ENCODE measurements at regions of chr6 and their contacts with region 1.

Region 1: GRCh38 chr6:5030596-5031136 is 26.8 kb upstream of the RPP40 start:
- DNase-seq: peak; percentile 85 to 95 (median 87)
- ATAC-seq: peak; percentile 97
- H3K4me3 ChIP-seq: no peak overlapping the region
- H3K27ac ChIP-seq: peak overlapping the region; percentile 28; the same call in 1 of the 3 replicates
- H3K4me1 ChIP-seq: peaks cover 7 to 14% of the 10 kb centered on the region in 2 experiments
- H3K27me3 ChIP-seq: 0 out of 5 replicates have a peak, but pooled peaks cover 0 to 2% of the 10 kb centered on the region in 2 experiments
- CTCF ChIP-seq: peak; percentile 84 to 94 (median 93)
- EP300 ChIP-seq: peak; percentile 20; the same call in 1 of the 2 replicates
- POLR2A ChIP-seq: no peak
- RAD21 ChIP-seq: peak; percentile 78 to 94

Region 2: GRCh38 chr6:4593951-4594350 is 436.7 kb before region 1 on chr6:
- CTCF ChIA-PET with region 1: no interaction called
- POLR2A ChIA-PET with region 1: no interaction called
- in situ Hi-C with region 1: no loop called
- intact Hi-C with region 1: no loop called
- DNase-seq: no peak
- ATAC-seq: no peak
- H3K4me3 ChIP-seq: no peak overlapping the region
- H3K27ac ChIP-seq: no peak overlapping the region
- H3K4me1 ChIP-seq: no peaks in the 10 kb centered on the region; a peak in 1 of 5 replicates
- H3K27me3 ChIP-seq: peaks cover 2 to 14% of the 10 kb centered on the region in 2 experiments
- CTCF ChIP-seq: no peak
- EP300 ChIP-seq: no peak
- POLR2A ChIP-seq: no peak
- RAD21 ChIP-seq: no peak

Region 3: GRCh38 chr6:4853782-4854511 is 176.7 kb before region 1 on chr6:
- CTCF ChIA-PET with region 1: no interaction called
- POLR2A ChIA-PET with region 1: no interaction called
- in situ Hi-C with region 1: no loop called
- intact Hi-C with region 1: loop called (anchors 10 kb)
- DNase-seq: peak in 2 of 4 experiments; percentile 71
- ATAC-seq: peak; percentile 85
- H3K4me3 ChIP-seq: no peak overlapping the region
- H3K27ac ChIP-seq: no peak overlapping the region
- H3K4me1 ChIP-seq: peaks cover 10 to 17% of the 10 kb centered on the region in 2 experiments; a peak in 4 of 5 replicates
- H3K27me3 ChIP-seq: no peaks in the 10 kb centered on the region
- CTCF ChIP-seq: no peak
- EP300 ChIP-seq: no peak
- POLR2A ChIP-seq: no peak
- RAD21 ChIP-seq: no peak

Region 4: DNA sequence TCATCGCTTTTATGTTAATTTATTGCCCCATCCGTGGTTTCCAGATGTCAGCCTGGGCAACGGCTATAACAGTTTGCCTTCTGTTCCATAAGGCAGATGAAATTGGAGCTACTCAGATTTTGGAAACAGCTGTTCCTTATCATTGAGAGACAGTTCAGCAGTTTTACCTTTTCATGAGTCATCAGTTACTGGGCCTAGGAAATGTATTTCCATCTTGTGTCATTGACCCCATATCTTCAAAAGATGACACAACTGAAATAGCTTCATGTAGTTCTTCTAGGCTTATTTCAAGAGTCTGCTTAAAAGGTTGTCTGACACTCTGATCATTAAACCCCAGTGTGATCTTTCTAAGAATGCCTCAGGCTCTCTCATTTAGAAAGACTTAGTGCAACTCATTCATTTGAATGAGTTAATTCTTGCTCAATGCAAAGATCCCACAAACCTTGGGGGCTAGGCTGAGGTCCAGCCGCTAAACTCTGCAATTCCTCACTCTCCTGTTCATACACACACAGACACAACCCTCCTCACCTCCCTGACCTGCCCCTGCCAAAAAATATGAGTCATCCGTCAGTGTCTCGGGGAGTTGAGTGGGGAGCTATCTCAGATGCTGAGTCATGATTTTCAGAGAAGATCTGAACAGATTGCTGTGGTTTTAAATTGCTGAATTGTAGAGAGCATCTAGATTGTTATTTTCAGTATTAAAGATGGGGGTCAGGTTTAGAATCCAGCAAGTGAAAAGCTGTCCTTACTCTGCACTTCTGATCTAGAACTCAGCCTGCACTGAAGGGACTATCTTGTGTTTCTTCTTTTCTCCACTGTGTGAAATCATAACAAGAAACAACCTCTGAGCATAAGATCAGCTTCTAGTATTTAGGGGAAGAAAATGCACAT is 88.6 kb before region 1 on chr6:
- CTCF ChIA-PET with region 1: no interaction called
- POLR2A ChIA-PET with region 1: no interaction called
- in situ Hi-C with region 1: no loop called
- intact Hi-C with region 1: loop called (anchors 5 kb)
- DNase-seq: peak; percentile 82 to 92 (median 88)
- ATAC-seq: peak; percentile 94
- H3K4me3 ChIP-seq: no peak overlapping the region
- H3K27ac ChIP-seq: peak overlapping the region; percentile 64; the same call in 2 of the 3 replicates
- H3K4me1 ChIP-seq: peaks cover 15 to 21% of the 10 kb centered on the region in 2 experiments
- H3K27me3 ChIP-seq: no peaks in the 10 kb centered on the region
- CTCF ChIP-seq: no peak
- EP300 ChIP-seq: peak; percentile 93
- POLR2A ChIP-seq: no peak
- RAD21 ChIP-seq: no peak

Region 5: DNA sequence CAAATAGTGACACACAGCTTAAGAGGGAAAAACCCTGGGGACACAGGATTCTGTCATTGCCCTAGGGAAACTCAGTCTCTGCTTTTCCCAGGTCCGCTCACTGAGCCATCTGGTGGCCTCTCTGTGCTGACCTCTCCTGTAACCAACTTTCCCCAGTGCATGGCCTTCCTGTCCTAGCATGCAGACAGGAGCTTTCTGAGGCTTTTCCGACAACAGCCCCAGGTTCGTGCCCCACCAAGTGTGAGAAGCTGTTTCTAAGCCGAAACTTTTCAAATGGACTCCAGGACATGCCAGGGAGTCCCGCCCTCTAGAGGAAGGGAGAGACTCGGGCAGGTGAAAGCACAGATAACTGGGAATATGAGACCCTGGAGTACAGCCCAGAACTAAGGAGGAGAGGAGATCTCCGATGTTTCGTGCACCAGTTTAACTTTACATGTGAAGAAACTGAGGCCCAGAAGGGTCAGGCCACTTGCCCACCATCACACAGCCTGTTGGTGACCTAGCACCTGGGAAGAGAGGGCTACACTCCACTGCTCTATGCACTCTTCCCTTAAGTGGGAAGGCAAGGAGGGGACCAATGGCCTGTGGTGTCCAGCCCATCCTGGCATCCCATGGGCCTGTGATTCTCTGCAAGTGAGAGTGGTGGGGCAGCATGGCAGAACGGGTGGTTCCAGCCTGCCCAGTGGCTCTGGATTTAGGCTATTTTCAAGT is 73.0 kb before region 1 on chr6:
- CTCF ChIA-PET with region 1: no interaction called
- POLR2A ChIA-PET with region 1: no interaction called
- in situ Hi-C with region 1: no loop called
- intact Hi-C with region 1: loop called (anchors 5 kb)
- DNase-seq: peak in 2 of 4 experiments; percentile 35 to 37
- ATAC-seq: peak; percentile 88
- H3K4me3 ChIP-seq: no peak overlapping the region
- H3K27ac ChIP-seq: no peak overlapping the region
- H3K4me1 ChIP-seq: no peaks in the 10 kb centered on the region
- H3K27me3 ChIP-seq: 0 out of 5 replicates have a peak, but pooled peaks cover 0 to 4% of the 10 kb centered on the region in 2 experiments
- CTCF ChIP-seq: peak; percentile 47 to 63 (median 57); a peak in 5 of 6 replicates
- EP300 ChIP-seq: no peak
- POLR2A ChIP-seq: no peak
- RAD21 ChIP-seq: peak in 1 of 2 experiments; percentile 60; a peak in 2 of 4 replicates